Naive thymus-derived CD4-positive, alpha-beta T cell (primary cell): ENCODE measurements at regions of chr1 and their contacts with region 1.

Region 1: GRCh38 chr1:32870615-32871363 is at the start of gene FNDC5:
- DNase-seq: no peak
- ATAC-seq: peak; percentile 14
- H3K4me3 ChIP-seq: no peak within 1 kb of the TSS
- H3K4me3 Mint-ChIP-seq: peak within 1 kb of the TSS; percentile 51 to 83 (median 68)
- H3K27ac ChIP-seq: no peak within 1 kb of the TSS
- H3K27ac Mint-ChIP-seq: no peak within 1 kb of the TSS
- H3K4me1 ChIP-seq: peaks cover 0 to 11% of the 10 kb centered on the region in 2 donors
- H3K4me1 Mint-ChIP-seq: peaks cover 11 to 28% (median 17%) of the 10 kb centered on the region in 7 donors
- H3K27me3 ChIP-seq: peaks cover 3 to 15% of the 10 kb centered on the region in 2 donors
- H3K27me3 Mint-ChIP-seq: peaks cover 44 to 60% (median 53%) of the 10 kb centered on the region in 5 donors
- total RNA-seq, gene FNDC5: not detected

Region 2: DNA sequence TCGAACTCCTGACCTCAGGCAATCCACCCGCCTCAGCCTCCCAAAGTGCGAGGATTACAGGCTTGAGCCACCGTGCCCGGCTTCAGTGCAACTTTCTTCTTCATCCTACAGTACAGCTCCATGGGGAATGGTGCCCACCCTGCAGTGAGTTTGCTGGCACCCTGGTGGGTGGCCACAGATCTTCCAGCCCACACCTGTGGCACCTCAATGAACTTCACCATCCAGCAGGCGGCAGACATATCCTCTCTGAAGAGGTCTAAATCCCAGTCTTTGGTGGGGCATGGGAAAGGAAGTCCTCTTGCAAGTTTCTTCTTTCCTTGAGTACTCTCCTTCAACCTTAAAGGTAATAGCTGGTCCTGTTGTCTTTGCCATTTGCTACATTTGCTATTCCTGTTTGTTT is 349.6 kb before region 1 on chr1:
- CTCF ChIA-PET with region 1: interaction called, 5 read pairs
- POLR2A ChIA-PET with region 1: no interaction called
- intact Hi-C with region 1: loop called in 1 of 2 experiments (anchors 1 kb)
- DNase-seq: no peak
- ATAC-seq: no peak
- H3K4me3 ChIP-seq: no peak overlapping the region
- H3K4me3 Mint-ChIP-seq: peak overlapping the region in 9 of 10 donors; percentile 48 to 83 (median 66)
- H3K27ac ChIP-seq: no peak overlapping the region
- H3K27ac Mint-ChIP-seq: no peak overlapping the region
- H3K4me1 ChIP-seq: no peaks in the 10 kb centered on the region
- H3K4me1 Mint-ChIP-seq: peaks cover 0 to 14% (median 5%) of the 10 kb centered on the region in 7 donors
- H3K27me3 ChIP-seq: no peaks in the 10 kb centered on the region
- H3K27me3 Mint-ChIP-seq: peaks cover 5 to 19% (median 8%) of the 10 kb centered on the region in 5 donors

Region 3: GRCh38 chr1:32773018-32773763 is 97.6 kb before region 1 on chr1:
- CTCF ChIA-PET with region 1: no interaction called
- POLR2A ChIA-PET with region 1: no interaction called
- intact Hi-C with region 1: no loop called
- DNase-seq: peak; percentile 52 to 77 (median 67)
- ATAC-seq: peak; percentile 84
- H3K4me3 ChIP-seq: no peak overlapping the region
- H3K4me3 Mint-ChIP-seq: no peak overlapping the region
- H3K27ac ChIP-seq: peak overlapping the region; percentile 24
- H3K27ac Mint-ChIP-seq: peak overlapping the region in 4 of 9 donors; percentile 10 to 77 (median 42)
- H3K4me1 ChIP-seq: no peaks in the 10 kb centered on the region
- H3K4me1 Mint-ChIP-seq: peaks cover 0 to 24% (median 6%) of the 10 kb centered on the region in 7 donors
- H3K27me3 ChIP-seq: no peaks in the 10 kb centered on the region
- H3K27me3 Mint-ChIP-seq: no peaks in the 10 kb centered on the region

Region 4: GRCh38 chr1:33460947-33461629 is 590.3 kb after region 1 on chr1:
- CTCF ChIA-PET with region 1: no interaction called
- POLR2A ChIA-PET with region 1: no interaction called
- intact Hi-C with region 1: no loop called
- DNase-seq: no peak
- ATAC-seq: peak; percentile 79
- H3K4me3 ChIP-seq: no peak overlapping the region
- H3K4me3 Mint-ChIP-seq: no peak overlapping the region
- H3K27ac ChIP-seq: no peak overlapping the region
- H3K27ac Mint-ChIP-seq: peak overlapping the region in 1 of 9 donors; percentile 11
- H3K4me1 ChIP-seq: no peaks in the 10 kb centered on the region
- H3K4me1 Mint-ChIP-seq: peaks cover 0 to 1% (median 0%) of the 10 kb centered on the region in 7 donors
- H3K27me3 ChIP-seq: no peaks in the 10 kb centered on the region
- H3K27me3 Mint-ChIP-seq: peaks cover 0 to 15% (median 9%) of the 10 kb centered on the region in 5 donors